SK-N-SH (cell line): ENCODE measurements at regions of chr20 and their contacts with region 1.

Region 1: DNA sequence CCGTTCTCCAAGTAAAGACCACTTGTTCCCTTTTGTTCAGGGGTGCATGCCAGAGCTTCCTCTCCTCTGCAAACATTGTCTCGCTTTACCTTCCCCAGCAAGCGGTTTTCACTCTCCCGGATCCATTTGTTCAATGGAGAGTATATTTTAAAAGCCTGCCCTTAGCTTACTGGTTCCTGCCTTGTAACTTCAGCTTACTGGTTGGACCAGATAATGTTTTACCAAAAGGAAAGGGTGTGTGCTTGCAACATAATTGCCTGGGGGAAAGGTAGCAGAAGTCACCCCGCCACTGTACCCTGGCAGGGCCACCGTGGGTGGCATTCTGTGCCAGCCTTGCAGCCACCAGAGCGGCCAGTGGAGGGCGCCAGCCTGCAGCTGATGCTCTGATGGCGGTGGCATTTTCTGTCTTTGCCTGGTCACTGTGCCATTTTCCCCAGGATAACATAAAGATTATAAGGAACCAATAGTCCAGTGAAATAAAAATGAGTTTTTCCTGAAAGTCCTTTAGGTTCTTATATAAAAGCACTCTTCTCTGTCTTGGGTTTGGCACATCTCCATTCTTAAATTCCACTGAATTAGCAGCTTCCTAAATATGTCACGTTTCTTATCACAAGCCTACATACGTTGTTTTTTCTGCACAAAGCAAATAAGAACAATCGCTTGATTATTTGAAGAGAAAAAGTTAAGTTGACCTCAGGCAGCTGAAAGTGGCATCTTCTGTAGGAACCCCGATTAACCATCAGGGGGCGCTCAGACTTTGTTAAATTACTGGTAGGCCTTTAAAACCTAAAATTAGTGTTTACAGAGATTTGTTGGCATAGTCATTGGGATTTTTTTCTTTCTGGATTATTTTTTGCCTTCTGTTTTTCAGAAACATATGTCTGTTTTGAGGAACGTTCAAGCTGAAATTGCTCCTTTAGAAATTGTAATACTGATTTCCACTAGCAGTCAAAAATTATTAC is 67.4 kb upstream of the XRN2 start:
- DNase-seq: peak; percentile 65
- H3K4me3 ChIP-seq: no peak overlapping the region; a peak in 1 of 4 replicates
- H3K27ac ChIP-seq: no peak overlapping the region
- H3K4me1 ChIP-seq: peaks cover 0 to 3% of the 10 kb centered on the region in 2 experiments; a peak in 2 of 4 replicates
- H3K27me3 ChIP-seq: no peaks in the 10 kb centered on the region
- CTCF ChIP-seq: peak; percentile 92
- EP300 ChIP-seq: no peak
- RAD21 ChIP-seq: peak; percentile 81

Region 2: DNA sequence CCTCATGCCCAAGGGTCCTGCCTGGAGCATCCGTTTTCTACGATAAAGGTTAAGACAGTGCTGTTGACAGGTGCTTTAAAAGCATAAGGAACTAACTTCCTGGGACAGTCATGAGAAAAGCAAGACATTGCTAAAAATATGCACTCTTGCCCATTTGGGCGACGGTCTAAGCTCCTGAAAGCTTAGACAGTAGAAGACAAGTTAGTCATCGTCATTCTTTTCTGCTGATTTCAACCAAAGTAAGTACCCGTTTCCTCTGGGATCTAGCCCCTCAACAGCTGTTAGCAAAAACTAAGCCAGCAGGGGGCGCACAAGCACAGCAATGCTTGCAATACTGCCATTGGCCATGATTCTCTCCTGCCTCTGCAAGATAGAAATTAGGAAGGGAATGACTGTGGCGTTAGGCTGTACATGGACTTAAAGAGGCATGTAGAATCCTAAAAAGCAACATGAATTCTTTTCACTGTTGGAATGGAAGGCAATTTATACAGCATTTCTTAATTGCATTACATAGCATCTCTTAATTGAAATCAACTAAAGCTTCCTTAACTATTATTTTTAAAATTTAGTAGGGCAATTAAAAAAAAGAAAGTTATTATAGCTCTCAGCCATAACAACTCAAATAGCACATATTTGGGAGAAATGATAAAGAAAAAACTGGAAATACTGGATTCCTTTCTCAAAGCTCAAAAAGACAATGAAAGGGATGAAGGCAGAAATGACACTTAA is 375.5 kb before region 1 on chr20:
- CTCF ChIA-PET with region 1: interaction called, 35 read pairs
- POLR2A ChIA-PET with region 1: no interaction called
- DNase-seq: peak; percentile 72
- H3K4me3 ChIP-seq: peak overlapping the region in 1 of 2 experiments; percentile 28; a peak in 1 of 4 replicates
- H3K27ac ChIP-seq: no peak overlapping the region
- H3K4me1 ChIP-seq: no peaks in the 10 kb centered on the region
- H3K27me3 ChIP-seq: peaks cover 10% of the 10 kb centered on the region; the same call in 1 of the 2 replicates
- CTCF ChIP-seq: peak; percentile 96
- EP300 ChIP-seq: no peak
- RAD21 ChIP-seq: peak; percentile 82

Region 3: GRCh38 chr20:20903773-20904500 is 331.8 kb before region 1 on chr20:
- CTCF ChIA-PET with region 1: no interaction called
- POLR2A ChIA-PET with region 1: no interaction called
- DNase-seq: no peak
- H3K4me3 ChIP-seq: no peak overlapping the region
- H3K27ac ChIP-seq: no peak overlapping the region
- H3K4me1 ChIP-seq: no peaks in the 10 kb centered on the region
- H3K27me3 ChIP-seq: peaks cover 6% of the 10 kb centered on the region; the same call in 1 of the 2 replicates
- CTCF ChIP-seq: no peak
- EP300 ChIP-seq: no peak
- RAD21 ChIP-seq: no peak

Region 4: GRCh38 chr20:21214431-21214830 is 21.3 kb before region 1 on chr20:
- CTCF ChIA-PET with region 1: interaction called, 47 read pairs
- POLR2A ChIA-PET with region 1: no interaction called
- DNase-seq: no peak
- H3K4me3 ChIP-seq: no peak overlapping the region
- H3K27ac ChIP-seq: no peak overlapping the region
- H3K4me1 ChIP-seq: peaks cover 0 to 4% of the 10 kb centered on the region in 2 experiments; a peak in 2 of 4 replicates
- H3K27me3 ChIP-seq: no peaks in the 10 kb centered on the region
- CTCF ChIP-seq: no peak
- EP300 ChIP-seq: no peak
- RAD21 ChIP-seq: no peak

Region 5: GRCh38 chr20:21262812-21263211 is 27.0 kb after region 1 on chr20:
- CTCF ChIA-PET with region 1: interaction called, 11 read pairs
- POLR2A ChIA-PET with region 1: no interaction called
- DNase-seq: no peak
- H3K4me3 ChIP-seq: no peak overlapping the region
- H3K27ac ChIP-seq: no peak overlapping the region
- H3K4me1 ChIP-seq: no peaks in the 10 kb centered on the region
- H3K27me3 ChIP-seq: peaks cover 8% of the 10 kb centered on the region; the same call in 1 of the 2 replicates
- CTCF ChIP-seq: no peak
- EP300 ChIP-seq: no peak
- RAD21 ChIP-seq: no peak

Region 6: GRCh38 chr20:21342656-21343345 is 107.0 kb after region 1 on chr20:
- CTCF ChIA-PET with region 1: interaction called, 11 read pairs
- POLR2A ChIA-PET with region 1: no interaction called
- DNase-seq: no peak
- H3K4me3 ChIP-seq: no peak overlapping the region
- H3K27ac ChIP-seq: no peak overlapping the region
- H3K4me1 ChIP-seq: peaks cover 3 to 5% of the 10 kb centered on the region in 2 experiments; a peak in 2 of 4 replicates
- H3K27me3 ChIP-seq: no peaks in the 10 kb centered on the region
- CTCF ChIP-seq: no peak
- EP300 ChIP-seq: no peak
- RAD21 ChIP-seq: no peak

Region 7: DNA sequence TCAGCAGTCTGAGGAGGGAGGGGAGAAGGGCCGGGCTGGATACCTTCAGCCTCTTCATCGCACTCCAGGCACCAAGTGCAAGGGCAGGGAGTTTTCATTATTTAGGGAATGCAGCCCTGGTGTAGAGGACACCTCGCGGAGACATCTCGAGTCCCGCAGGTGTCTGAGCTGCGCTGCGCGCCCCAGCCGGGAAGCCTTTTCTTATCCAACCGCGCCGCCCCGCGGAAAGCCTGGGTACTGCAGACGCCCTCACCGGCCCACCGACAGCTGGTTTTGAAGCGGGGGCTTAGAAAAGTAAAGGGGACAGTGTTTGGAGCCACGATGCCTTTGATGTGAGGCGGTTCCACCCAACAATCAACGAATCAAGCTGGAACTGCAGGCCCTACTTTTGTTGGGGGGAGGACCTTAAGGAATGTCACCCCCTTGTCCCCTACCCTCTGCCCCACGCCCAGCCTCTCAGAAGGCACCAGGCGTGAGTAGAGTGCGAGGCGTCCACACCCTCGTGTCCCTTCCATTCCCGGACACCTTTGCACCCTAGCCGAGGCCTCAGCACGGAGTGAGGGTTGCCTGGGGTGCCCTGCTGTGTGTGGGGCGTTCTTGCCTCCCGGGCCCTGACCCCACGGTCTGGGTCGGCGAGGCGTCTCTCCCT is 269.5 kb after region 1 on chr20:
- CTCF ChIA-PET with region 1: interaction called, 336 read pairs
- POLR2A ChIA-PET with region 1: no interaction called
- DNase-seq: peak; percentile 85
- H3K4me3 ChIP-seq: peak overlapping the region in 1 of 2 experiments; percentile 23; a peak in 1 of 4 replicates
- H3K27ac ChIP-seq: no peak overlapping the region
- H3K4me1 ChIP-seq: peaks cover 0 to 4% of the 10 kb centered on the region in 2 experiments; a peak in 2 of 4 replicates
- H3K27me3 ChIP-seq: peaks cover 79% of the 10 kb centered on the region
- CTCF ChIP-seq: peak; percentile 97
- EP300 ChIP-seq: no peak
- RAD21 ChIP-seq: peak; percentile 93